Caco-2 (cell line): ENCODE measurements at regions of chr14 and their contacts with region 1.

Region 1: GRCh38 chr14:75088574-75089373 is 19.3 kb downstream of the ZC2HC1C start:
- DNase-seq: peak; percentile 55 to 68
- H3K4me3 ChIP-seq: no peak overlapping the region
- H3K4me3 Mint-ChIP-seq: no peak overlapping the region
- H3K27ac Mint-ChIP-seq: no peak overlapping the region
- H3K4me1 ChIP-seq: no peaks in the 10 kb centered on the region
- H3K4me1 Mint-ChIP-seq: no peaks in the 10 kb centered on the region
- H3K27me3 ChIP-seq: no peaks in the 10 kb centered on the region
- H3K27me3 Mint-ChIP-seq: no peaks in the 10 kb centered on the region
- CTCF ChIP-seq: peak; percentile 66 to 76

Region 2: DNA sequence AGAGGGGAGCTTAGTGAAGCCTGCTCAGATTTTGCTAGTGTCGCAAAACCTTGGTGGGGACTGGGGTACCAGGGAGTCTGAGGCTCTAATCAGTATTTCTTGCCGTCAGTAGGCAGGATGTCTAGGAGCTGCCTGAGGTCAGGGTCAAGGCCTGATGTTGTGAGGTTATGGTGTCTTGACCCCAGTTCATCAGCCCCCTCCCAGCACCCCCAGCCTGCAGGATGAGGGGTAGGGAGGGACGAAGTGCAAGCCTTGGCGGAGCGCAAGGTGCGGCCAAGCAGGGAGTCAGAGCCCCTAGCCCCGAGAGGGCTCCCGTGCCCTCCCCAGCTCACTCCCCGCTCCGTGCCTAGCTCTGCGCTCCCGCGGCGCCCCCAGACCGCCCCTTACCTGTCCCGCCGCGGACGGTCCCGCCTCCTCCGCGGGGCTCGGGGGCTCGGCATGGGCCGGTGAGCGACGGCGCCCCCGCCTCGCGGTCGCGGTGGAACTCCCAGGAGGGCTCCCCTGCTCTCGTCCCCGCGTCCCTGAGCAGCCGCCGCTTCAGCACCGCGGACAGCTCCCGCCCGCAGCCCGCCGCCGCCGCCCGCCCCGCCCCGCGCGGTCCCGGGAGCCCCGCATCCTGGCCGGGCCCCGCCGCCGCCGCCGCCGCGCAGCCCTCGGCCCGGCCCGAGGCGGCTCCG is 663.1 kb before region 1 on chr14:
- CTCF ChIA-PET with region 1: no interaction called
- POLR2A ChIA-PET with region 1: no interaction called
- intact Hi-C with region 1: no loop called
- DNase-seq: peak in 1 of 2 experiments; percentile 84
- H3K4me3 ChIP-seq: peak overlapping the region; percentile 24
- H3K4me3 Mint-ChIP-seq: no peak overlapping the region
- H3K27ac Mint-ChIP-seq: no peak overlapping the region
- H3K4me1 ChIP-seq: no peaks in the 10 kb centered on the region
- H3K4me1 Mint-ChIP-seq: no peaks in the 10 kb centered on the region
- H3K27me3 ChIP-seq: no peaks in the 10 kb centered on the region; the same call in 1 of the 2 replicates
- H3K27me3 Mint-ChIP-seq: peaks cover 12% of the 10 kb centered on the region
- CTCF ChIP-seq: no peak

Region 3: DNA sequence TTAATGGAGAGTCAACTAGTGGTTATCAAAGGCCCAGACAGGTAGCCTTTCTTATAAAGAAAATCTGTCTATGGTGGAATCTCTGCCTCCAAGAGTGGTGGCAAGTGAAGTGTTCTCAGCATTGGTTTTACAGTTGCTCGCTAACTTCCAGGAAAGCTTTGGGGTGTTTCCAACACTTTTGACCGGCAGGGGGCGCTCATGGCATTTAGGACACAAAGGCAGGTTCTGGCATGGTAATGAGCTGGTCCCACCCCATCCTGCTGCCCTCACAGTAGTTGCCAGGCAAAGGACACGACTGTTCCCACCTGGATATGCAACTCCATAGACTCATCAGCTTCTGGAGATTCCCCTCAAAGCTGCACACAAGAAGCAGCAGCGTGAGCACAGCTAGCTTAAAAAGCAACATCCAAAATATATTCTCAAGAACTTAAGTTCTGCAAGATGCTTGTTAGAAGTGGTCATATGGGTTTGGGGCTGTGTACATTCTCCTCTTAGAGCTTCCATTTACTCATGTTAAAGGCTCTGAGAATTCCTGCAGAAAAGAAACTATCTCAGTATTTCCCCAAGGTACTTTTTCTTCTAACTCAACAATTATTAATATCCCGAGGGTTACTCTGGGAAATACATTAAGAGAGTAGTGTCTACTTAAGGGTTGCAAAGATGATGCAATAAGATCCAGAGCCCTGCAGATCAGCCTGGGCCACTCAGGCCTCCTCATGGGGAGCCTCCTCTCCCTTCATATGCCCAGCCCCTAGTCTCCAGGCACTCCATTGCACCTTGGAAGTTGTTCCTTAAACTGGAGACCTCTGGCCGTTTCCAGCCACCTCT is 227.7 kb before region 1 on chr14:
- CTCF ChIA-PET with region 1: interaction called, 14 read pairs
- POLR2A ChIA-PET with region 1: no interaction called
- intact Hi-C with region 1: no loop called
- DNase-seq: peak; percentile 86 to 89
- H3K4me3 ChIP-seq: no peak overlapping the region
- H3K4me3 Mint-ChIP-seq: no peak overlapping the region
- H3K27ac Mint-ChIP-seq: no peak overlapping the region
- H3K4me1 ChIP-seq: no peaks in the 10 kb centered on the region
- H3K4me1 Mint-ChIP-seq: no peaks in the 10 kb centered on the region
- H3K27me3 ChIP-seq: no peaks in the 10 kb centered on the region
- H3K27me3 Mint-ChIP-seq: peaks cover 4% of the 10 kb centered on the region
- CTCF ChIP-seq: peak; percentile 79 to 80

Region 4: DNA sequence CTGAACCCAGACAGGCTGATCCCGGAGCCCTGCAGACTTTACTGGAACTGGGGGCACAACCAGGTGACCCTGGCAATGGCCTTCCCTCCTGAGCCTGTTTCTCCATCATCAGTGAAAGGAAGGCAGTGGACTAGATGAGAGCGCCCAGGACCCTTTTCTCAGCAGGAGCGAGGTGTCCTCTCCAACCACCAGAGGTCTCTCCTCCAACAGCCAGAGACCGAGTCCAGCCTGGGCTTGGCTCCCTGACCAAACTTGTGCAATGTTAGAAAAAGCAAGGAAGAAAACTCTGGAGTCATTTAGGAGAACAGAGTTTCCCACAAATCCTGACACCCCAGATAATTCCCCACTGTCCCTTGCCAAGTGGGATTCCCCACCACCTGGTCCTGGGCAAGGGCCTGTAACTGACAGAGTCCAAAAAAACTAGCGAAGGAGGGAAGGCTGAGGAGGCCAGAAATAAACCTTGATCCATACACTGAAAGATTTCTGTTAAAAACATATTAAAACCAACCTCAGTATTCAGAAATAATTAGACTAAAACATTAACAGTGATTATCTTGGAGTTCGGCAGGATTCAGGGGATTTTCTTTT is 174.7 kb before region 1 on chr14:
- CTCF ChIA-PET with region 1: interaction called, 7 read pairs
- POLR2A ChIA-PET with region 1: no interaction called
- intact Hi-C with region 1: loop called (anchors 1 kb)
- DNase-seq: peak; percentile 74
- H3K4me3 ChIP-seq: no peak overlapping the region
- H3K4me3 Mint-ChIP-seq: no peak overlapping the region
- H3K27ac Mint-ChIP-seq: no peak overlapping the region
- H3K4me1 ChIP-seq: no peaks in the 10 kb centered on the region
- H3K4me1 Mint-ChIP-seq: no peaks in the 10 kb centered on the region
- H3K27me3 ChIP-seq: no peaks in the 10 kb centered on the region
- H3K27me3 Mint-ChIP-seq: no peaks in the 10 kb centered on the region
- CTCF ChIP-seq: peak; percentile 67 to 87

Region 5: GRCh38 chr14:74932401-74932901 is 156.3 kb before region 1 on chr14:
- CTCF ChIA-PET with region 1: no interaction called
- POLR2A ChIA-PET with region 1: no interaction called
- intact Hi-C with region 1: no loop called
- DNase-seq: no peak
- H3K4me3 ChIP-seq: no peak overlapping the region
- H3K4me3 Mint-ChIP-seq: no peak overlapping the region
- H3K27ac Mint-ChIP-seq: no peak overlapping the region
- H3K4me1 ChIP-seq: no peaks in the 10 kb centered on the region
- H3K4me1 Mint-ChIP-seq: no peaks in the 10 kb centered on the region
- H3K27me3 ChIP-seq: no peaks in the 10 kb centered on the region
- H3K27me3 Mint-ChIP-seq: no peaks in the 10 kb centered on the region
- CTCF ChIP-seq: no peak

Region 6: GRCh38 chr14:74945823-74946682 is 142.7 kb before region 1 on chr14:
- CTCF ChIA-PET with region 1: no interaction called
- POLR2A ChIA-PET with region 1: no interaction called
- intact Hi-C with region 1: loop called (anchors 1 kb)
- DNase-seq: peak; percentile 77 to 86
- H3K4me3 ChIP-seq: no peak overlapping the region
- H3K4me3 Mint-ChIP-seq: no peak overlapping the region
- H3K27ac Mint-ChIP-seq: peak overlapping the region; percentile 7
- H3K4me1 ChIP-seq: peaks cover 29% of the 10 kb centered on the region
- H3K4me1 Mint-ChIP-seq: peaks cover 9% of the 10 kb centered on the region
- H3K27me3 ChIP-seq: no peaks in the 10 kb centered on the region
- H3K27me3 Mint-ChIP-seq: no peaks in the 10 kb centered on the region
- CTCF ChIP-seq: peak; percentile 81 to 93

Region 7: DNA sequence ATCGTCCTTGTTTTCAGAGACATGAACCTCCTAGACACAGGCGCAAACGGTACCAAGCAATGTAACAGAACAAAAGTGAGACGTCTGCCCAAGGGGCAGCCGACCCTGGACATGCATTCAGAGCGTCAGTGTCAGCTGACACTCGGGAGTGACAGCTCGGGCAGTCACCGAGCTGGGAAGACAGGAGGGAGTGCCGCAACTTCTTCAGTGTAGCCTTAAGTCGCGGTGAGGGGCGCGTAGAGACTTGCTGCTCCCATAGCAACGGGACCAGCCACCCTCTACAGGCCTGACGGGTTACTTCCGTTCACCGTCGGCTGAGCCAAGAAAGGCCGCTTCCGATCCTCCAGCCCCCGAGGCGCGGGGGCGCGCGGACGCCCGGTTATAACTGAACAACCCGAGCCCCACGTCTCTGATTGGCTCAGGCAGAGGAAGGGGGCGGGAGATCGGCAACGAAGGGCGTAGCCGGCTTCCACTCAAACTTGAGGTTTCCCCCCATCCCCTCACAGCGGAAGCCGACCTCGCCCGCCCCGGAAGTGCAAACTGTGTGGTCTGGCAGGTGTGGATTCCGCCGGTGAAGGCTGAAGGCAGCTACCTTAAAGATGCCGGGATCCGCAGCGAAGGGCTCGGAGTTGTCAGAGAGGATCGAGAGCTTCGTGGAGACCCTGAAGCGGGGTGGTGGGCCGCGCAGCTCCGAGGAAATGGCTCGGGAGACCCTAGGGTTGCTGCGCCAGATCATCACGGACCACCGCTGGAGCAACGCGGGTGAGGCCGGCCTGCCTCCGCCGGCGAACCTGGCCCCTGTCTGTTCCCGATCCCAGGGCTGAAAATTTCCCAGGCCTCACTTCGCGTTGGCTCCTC is 86.2 kb before region 1 on chr14 and contains the start of gene EIF2B2:
- CTCF ChIA-PET with region 1: no interaction called
- POLR2A ChIA-PET with region 1: no interaction called
- intact Hi-C with region 1: loop called (anchors 5 kb)
- DNase-seq: peak; percentile 98
- H3K4me3 ChIP-seq: peak within 1 kb of the TSS; percentile 82
- H3K4me3 Mint-ChIP-seq: peak within 1 kb of the TSS; percentile 87
- H3K27ac Mint-ChIP-seq: peak within 1 kb of the TSS; percentile 86
- H3K4me1 ChIP-seq: peaks cover 6% of the 10 kb centered on the region; the same call in 1 of the 2 replicates
- H3K4me1 Mint-ChIP-seq: peaks cover 7% of the 10 kb centered on the region
- H3K27me3 ChIP-seq: no peaks in the 10 kb centered on the region
- H3K27me3 Mint-ChIP-seq: no peaks in the 10 kb centered on the region
- CTCF ChIP-seq: peak in 1 of 2 experiments; percentile 29
- total RNA-seq, gene EIF2B2: 48.8 and 54.4 TPM in 2 replicates

Region 8: GRCh38 chr14:75042035-75042434 is 46.7 kb before region 1 on chr14:
- CTCF ChIA-PET with region 1: no interaction called
- POLR2A ChIA-PET with region 1: no interaction called
- intact Hi-C with region 1: no loop called
- DNase-seq: no peak
- H3K4me3 ChIP-seq: no peak overlapping the region
- H3K4me3 Mint-ChIP-seq: no peak overlapping the region
- H3K27ac Mint-ChIP-seq: no peak overlapping the region
- H3K4me1 ChIP-seq: peaks cover 23% of the 10 kb centered on the region
- H3K4me1 Mint-ChIP-seq: peaks cover 13% of the 10 kb centered on the region
- H3K27me3 ChIP-seq: no peaks in the 10 kb centered on the region
- H3K27me3 Mint-ChIP-seq: no peaks in the 10 kb centered on the region
- CTCF ChIP-seq: no peak

Region 9: DNA sequence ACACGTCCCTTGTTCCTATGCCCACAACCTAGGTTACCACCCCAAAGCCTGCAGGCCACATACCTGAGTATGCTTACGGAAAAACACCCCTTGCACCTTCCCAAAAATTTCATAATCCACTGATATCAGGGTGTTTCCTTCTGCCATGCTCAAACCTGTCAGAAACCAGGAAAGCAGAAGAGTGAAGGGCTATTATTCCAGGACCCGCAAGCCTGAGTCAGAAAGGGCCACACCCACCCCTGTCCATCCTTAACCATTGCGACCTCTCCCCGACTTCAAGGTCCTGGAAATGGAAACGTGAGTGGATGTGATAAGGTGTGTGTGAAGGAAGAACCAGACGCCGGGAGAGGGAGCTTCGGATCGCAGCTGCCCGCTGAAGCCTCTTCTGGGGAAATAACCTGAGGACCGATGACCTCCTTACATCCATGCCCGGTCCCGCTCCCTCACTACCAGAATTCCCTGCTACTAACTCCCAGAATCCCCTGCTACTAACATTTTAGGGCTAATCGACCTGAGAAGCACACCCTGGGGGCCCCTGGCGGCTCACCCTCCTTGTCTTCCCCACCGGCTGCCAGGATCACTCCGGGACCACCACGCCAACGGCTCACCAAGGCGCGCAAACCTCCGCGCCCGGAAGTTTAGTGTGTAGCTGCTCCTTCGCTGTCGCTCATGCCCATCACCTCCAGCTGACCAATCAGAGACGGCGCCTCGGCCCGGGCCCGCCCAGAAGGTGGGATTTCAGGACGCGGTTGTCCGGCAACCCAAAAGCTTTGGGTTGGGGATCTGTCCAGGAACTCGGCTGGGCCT is 25.2 kb before region 1 on chr14 and contains the start of gene ACYP1:
- CTCF ChIA-PET with region 1: interaction called, 11 read pairs
- POLR2A ChIA-PET with region 1: no interaction called
- intact Hi-C with region 1: no loop called
- DNase-seq: peak; percentile 93 to 95
- H3K4me3 ChIP-seq: peak within 1 kb of the TSS; percentile 60
- H3K4me3 Mint-ChIP-seq: peak within 1 kb of the TSS; percentile 99
- H3K27ac Mint-ChIP-seq: peak within 1 kb of the TSS; percentile 92
- H3K4me1 ChIP-seq: no peaks in the 10 kb centered on the region
- H3K4me1 Mint-ChIP-seq: no peaks in the 10 kb centered on the region
- H3K27me3 ChIP-seq: no peaks in the 10 kb centered on the region
- H3K27me3 Mint-ChIP-seq: no peaks in the 10 kb centered on the region
- CTCF ChIP-seq: peak in 1 of 2 experiments; percentile 21
- total RNA-seq, gene ACYP1: 16.0 and 21.3 TPM in 2 replicates

Region 10: GRCh38 chr14:75198291-75198933 is 109.6 kb after region 1 on chr14:
- CTCF ChIA-PET with region 1: no interaction called
- POLR2A ChIA-PET with region 1: no interaction called
- intact Hi-C with region 1: no loop called
- DNase-seq: no peak
- H3K4me3 ChIP-seq: no peak overlapping the region
- H3K4me3 Mint-ChIP-seq: no peak overlapping the region
- H3K27ac Mint-ChIP-seq: no peak overlapping the region
- H3K4me1 ChIP-seq: peaks cover 32% of the 10 kb centered on the region
- H3K4me1 Mint-ChIP-seq: peaks cover 23% of the 10 kb centered on the region
- H3K27me3 ChIP-seq: no peaks in the 10 kb centered on the region
- H3K27me3 Mint-ChIP-seq: no peaks in the 10 kb centered on the region
- CTCF ChIP-seq: no peak